ENCODE measurements at regions of chr16 and their contacts with region 1.

Region 1: GRCh38 chr16:81585785-81586184 is 141.2 kb downstream of the CMIP start:
- DNase-seq: peak; percentile 59
- H3K4me3 ChIP-seq: no peak overlapping the region
- H3K4me3 Mint-ChIP-seq: peak overlapping the region; percentile 48
- H3K27ac Mint-ChIP-seq: peak overlapping the region; percentile 93
- H3K4me1 ChIP-seq: peaks cover 56% of the 10 kb centered on the region
- H3K4me1 Mint-ChIP-seq: peaks cover 56% of the 10 kb centered on the region
- H3K27me3 ChIP-seq: no peaks in the 10 kb centered on the region
- H3K27me3 Mint-ChIP-seq: no peaks in the 10 kb centered on the region
- CTCF ChIP-seq: peak; percentile 37 to 46

Region 2: DNA sequence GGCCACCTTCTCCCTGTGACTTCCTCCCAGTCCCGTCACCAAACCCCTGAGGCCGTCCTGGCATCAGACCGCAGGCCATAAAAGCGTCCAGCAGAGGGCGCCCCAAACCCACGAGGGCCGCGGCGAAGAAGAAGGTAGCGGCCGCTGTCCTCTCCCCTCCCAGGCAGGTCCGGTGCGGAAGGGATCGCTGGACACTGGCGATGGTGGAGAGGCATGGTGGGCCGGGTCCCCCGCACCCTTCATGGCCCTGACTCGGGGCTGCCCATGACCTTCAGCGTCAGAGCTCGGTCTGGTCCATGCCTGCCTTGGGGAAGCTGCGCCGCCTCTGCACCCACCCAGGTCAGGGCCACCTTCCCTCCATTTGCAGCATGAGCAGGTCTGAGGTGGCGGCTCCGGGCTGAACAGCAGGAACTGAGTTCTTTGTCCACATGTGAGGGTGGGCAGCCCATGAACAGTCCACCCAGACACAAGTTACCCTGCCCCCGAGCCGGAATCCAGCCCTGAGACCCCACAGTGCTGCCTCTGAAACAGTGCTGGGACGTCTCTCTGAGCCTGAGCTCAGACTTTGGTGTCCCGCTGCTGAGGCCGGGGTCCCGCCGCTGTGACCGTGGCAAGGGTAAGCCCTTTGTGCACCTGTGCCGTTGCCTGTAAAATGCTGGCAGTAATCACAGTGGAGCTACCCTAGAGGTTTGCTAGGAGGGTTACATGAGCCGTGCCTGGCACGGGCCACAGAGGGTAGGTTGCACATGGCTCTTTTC is 182.0 kb before region 1 on chr16:
- CTCF ChIA-PET with region 1: interaction called, 4 read pairs
- POLR2A ChIA-PET with region 1: interaction called, 3 read pairs
- intact Hi-C with region 1: loop called (anchors 1 kb)
- DNase-seq: peak; percentile 92 to 96
- H3K4me3 ChIP-seq: peak overlapping the region; percentile 34
- H3K4me3 Mint-ChIP-seq: peak overlapping the region; percentile 61
- H3K27ac Mint-ChIP-seq: peak overlapping the region; percentile 4
- H3K4me1 ChIP-seq: peaks cover 24% of the 10 kb centered on the region
- H3K4me1 Mint-ChIP-seq: peaks cover 19% of the 10 kb centered on the region
- H3K27me3 ChIP-seq: no peaks in the 10 kb centered on the region
- H3K27me3 Mint-ChIP-seq: no peaks in the 10 kb centered on the region
- CTCF ChIP-seq: peak; percentile 96 to 97

Region 3: GRCh38 chr16:81531419-81531821 is 54.4 kb before region 1 on chr16:
- CTCF ChIA-PET with region 1: no interaction called
- POLR2A ChIA-PET with region 1: no interaction called
- intact Hi-C with region 1: loop called (anchors 5 kb)
- DNase-seq: peak; percentile 30 to 87
- H3K4me3 ChIP-seq: no peak overlapping the region
- H3K4me3 Mint-ChIP-seq: no peak overlapping the region
- H3K27ac Mint-ChIP-seq: peak overlapping the region; percentile 58
- H3K4me1 ChIP-seq: peaks cover 33% of the 10 kb centered on the region
- H3K4me1 Mint-ChIP-seq: peaks cover 37% of the 10 kb centered on the region
- H3K27me3 ChIP-seq: no peaks in the 10 kb centered on the region
- H3K27me3 Mint-ChIP-seq: no peaks in the 10 kb centered on the region
- CTCF ChIP-seq: no peak

Region 4: GRCh38 chr16:81600901-81601428 is 15.2 kb after region 1 on chr16:
- CTCF ChIA-PET with region 1: interaction called, 3 read pairs
- POLR2A ChIA-PET with region 1: no interaction called
- intact Hi-C with region 1: loop called (anchors 1 kb)
- DNase-seq: no peak
- H3K4me3 ChIP-seq: no peak overlapping the region
- H3K4me3 Mint-ChIP-seq: no peak overlapping the region
- H3K27ac Mint-ChIP-seq: peak overlapping the region; percentile 97
- H3K4me1 ChIP-seq: peaks cover 53% of the 10 kb centered on the region
- H3K4me1 Mint-ChIP-seq: peaks cover 51% of the 10 kb centered on the region
- H3K27me3 ChIP-seq: no peaks in the 10 kb centered on the region
- H3K27me3 Mint-ChIP-seq: no peaks in the 10 kb centered on the region
- CTCF ChIP-seq: no peak

Region 5: GRCh38 chr16:81723098-81723723 is 137.4 kb after region 1 on chr16:
- CTCF ChIA-PET with region 1: no interaction called
- POLR2A ChIA-PET with region 1: no interaction called
- intact Hi-C with region 1: loop called (anchors 1 kb)
- DNase-seq: peak; percentile 69 to 85
- H3K4me3 ChIP-seq: no peak overlapping the region
- H3K4me3 Mint-ChIP-seq: no peak overlapping the region
- H3K27ac Mint-ChIP-seq: no peak overlapping the region
- H3K4me1 ChIP-seq: peaks cover 6% of the 10 kb centered on the region; the same call in 1 of the 2 replicates
- H3K4me1 Mint-ChIP-seq: no peaks in the 10 kb centered on the region
- H3K27me3 ChIP-seq: no peaks in the 10 kb centered on the region
- H3K27me3 Mint-ChIP-seq: peaks cover 2% of the 10 kb centered on the region
- CTCF ChIP-seq: peak; percentile 58 to 78

Region 6: DNA sequence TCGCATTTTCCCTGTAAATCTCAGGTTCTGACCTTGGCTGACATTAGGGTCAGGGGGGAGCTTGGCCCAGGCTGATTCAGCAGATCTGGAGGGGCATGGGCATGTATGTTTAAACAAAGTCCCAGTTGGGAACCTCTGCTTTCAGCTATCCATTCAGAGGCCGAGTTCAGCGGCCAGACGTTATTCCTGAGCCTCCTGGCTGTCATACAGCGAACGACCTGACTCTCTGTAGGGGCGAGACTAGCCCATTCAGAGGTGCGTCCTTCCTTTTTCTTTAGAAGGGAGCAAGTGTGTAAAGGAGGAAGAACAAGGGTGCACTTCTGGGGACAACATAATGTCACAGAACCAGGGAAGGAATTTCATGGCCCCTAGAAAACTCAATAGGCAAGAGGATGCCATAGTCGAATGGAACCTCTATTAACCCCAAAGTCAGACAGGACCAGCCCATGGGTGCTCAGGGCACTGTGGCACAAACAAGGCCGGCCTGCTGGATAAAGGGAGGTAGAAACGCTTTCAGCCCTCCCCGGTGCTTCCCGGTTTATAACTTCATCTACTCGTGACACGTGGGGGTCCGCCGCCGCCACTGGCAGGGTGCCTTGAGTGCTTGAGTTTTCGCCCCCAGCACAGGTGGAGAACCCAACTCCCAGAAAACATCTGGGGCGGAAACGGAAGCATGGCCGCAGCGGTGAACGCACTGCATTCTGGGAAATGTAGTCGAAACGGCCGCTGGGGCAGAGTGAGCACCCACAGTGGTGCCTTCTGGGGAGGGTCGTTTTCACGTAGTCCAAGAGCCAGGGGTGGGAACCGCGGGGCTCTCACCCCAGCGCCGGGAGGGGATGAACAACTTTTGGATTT is 160.1 kb after region 1 on chr16:
- CTCF ChIA-PET with region 1: no interaction called
- POLR2A ChIA-PET with region 1: no interaction called
- intact Hi-C with region 1: no loop called
- DNase-seq: peak in 1 of 2 experiments; percentile 64
- H3K4me3 ChIP-seq: peak overlapping the region; percentile 24
- H3K4me3 Mint-ChIP-seq: peak overlapping the region; percentile 69
- H3K27ac Mint-ChIP-seq: no peak overlapping the region
- H3K4me1 ChIP-seq: no peaks in the 10 kb centered on the region
- H3K4me1 Mint-ChIP-seq: no peaks in the 10 kb centered on the region
- H3K27me3 ChIP-seq: no peaks in the 10 kb centered on the region
- H3K27me3 Mint-ChIP-seq: no peaks in the 10 kb centered on the region
- CTCF ChIP-seq: no peak

Measured in Caco-2 (cell line).